ENCODE measurements at regions of chr15 and their contacts with region 1.

Region 1: GRCh38 chr15:98943601-98944151 is 63.9 kb downstream of the PGPEP1L start:
- DNase-seq: peak; percentile 92 to 94
- ATAC-seq: peak; percentile 83 to 90
- H3K4me3 ChIP-seq: no peak overlapping the region
- H3K27ac ChIP-seq: peak overlapping the region; percentile 82 to 96 (median 90)
- H3K4me1 ChIP-seq: peaks cover 51 to 67% of the 10 kb centered on the region in 2 donors
- H3K27me3 ChIP-seq: no peaks in the 10 kb centered on the region
- CTCF ChIP-seq: no peak
- POLR2A ChIP-seq: peak in 1 of 2 donors; percentile 6

Region 2: DNA sequence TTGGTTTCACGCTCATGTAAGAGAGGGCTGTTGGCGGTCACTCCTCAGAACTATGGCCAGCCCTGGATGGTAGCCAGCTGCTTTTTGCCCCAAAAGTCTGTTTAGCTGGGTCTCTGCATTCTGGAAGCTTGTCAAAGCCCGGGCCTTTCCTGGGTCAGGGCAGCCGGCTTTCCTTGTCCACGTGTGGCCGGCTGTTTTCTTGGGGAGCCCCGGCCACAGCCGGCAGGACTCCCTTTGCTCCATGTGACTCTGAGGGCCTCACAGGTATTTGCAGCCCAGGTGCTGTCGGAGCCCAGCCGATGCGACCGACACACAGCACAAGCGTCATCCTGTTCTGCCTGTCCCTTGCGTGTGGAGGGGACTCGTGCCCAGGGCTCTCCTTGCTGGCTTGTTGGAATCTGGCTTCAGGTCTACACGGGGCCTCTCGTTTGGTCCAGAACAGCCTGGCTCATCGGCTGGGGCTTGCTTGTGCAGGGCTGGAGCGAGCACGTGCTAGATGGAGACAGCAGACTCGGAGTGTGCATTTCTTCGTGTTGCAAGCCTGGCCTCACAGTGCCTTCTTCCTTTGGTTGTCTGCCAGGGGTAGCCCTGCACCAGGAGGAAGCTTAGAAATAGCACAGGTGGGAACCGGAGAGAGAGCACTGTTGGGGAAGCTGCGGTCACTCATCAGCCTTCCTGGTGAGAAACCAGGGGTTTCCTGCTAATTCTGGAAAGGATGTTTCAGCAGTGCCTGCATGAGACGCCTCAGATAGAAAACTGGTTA is 12.5 kb after region 1 on chr15:
- in situ Hi-C with region 1: no loop called
- intact Hi-C with region 1: no loop called
- DNase-seq: peak; percentile 35 to 78
- ATAC-seq: peak; percentile 23 to 55
- H3K4me3 ChIP-seq: no peak overlapping the region
- H3K27ac ChIP-seq: peak overlapping the region; percentile 69 to 89 (median 78)
- H3K4me1 ChIP-seq: peaks cover 34 to 50% of the 10 kb centered on the region in 2 donors
- H3K27me3 ChIP-seq: no peaks in the 10 kb centered on the region
- CTCF ChIP-seq: no peak
- POLR2A ChIP-seq: no peak

Region 3: GRCh38 chr15:99009741-99010370 is 66.2 kb after region 1 on chr15:
- in situ Hi-C with region 1: no loop called
- intact Hi-C with region 1: loop called (anchors 5 kb)
- DNase-seq: no peak
- ATAC-seq: no peak
- H3K4me3 ChIP-seq: no peak overlapping the region
- H3K27ac ChIP-seq: peak overlapping the region in 2 of 4 donors; percentile 1 to 24
- H3K4me1 ChIP-seq: peaks cover 10 to 13% of the 10 kb centered on the region in 2 donors
- H3K27me3 ChIP-seq: no peaks in the 10 kb centered on the region
- CTCF ChIP-seq: no peak
- POLR2A ChIP-seq: no peak

Region 4: GRCh38 chr15:99053511-99054387 is 110.1 kb after region 1 on chr15:
- in situ Hi-C with region 1: loop called in 3 of 4 experiments (anchors 5 to 10 kb)
- intact Hi-C with region 1: loop called (anchors 1 kb)
- DNase-seq: peak; percentile 72 to 78
- ATAC-seq: peak; percentile 86 to 87
- H3K4me3 ChIP-seq: no peak overlapping the region
- H3K27ac ChIP-seq: peak overlapping the region; percentile 76 to 91 (median 82)
- H3K4me1 ChIP-seq: peaks cover 23 to 30% of the 10 kb centered on the region in 2 donors
- H3K27me3 ChIP-seq: no peaks in the 10 kb centered on the region
- CTCF ChIP-seq: no peak
- POLR2A ChIP-seq: peak; percentile 47 to 78

Measured in gastrocnemius medialis (tissue), 4 donors.